Left colon (tissue), 2 donors: ENCODE measurements at regions of chr16 and their contacts with region 1.

Region 1: DNA sequence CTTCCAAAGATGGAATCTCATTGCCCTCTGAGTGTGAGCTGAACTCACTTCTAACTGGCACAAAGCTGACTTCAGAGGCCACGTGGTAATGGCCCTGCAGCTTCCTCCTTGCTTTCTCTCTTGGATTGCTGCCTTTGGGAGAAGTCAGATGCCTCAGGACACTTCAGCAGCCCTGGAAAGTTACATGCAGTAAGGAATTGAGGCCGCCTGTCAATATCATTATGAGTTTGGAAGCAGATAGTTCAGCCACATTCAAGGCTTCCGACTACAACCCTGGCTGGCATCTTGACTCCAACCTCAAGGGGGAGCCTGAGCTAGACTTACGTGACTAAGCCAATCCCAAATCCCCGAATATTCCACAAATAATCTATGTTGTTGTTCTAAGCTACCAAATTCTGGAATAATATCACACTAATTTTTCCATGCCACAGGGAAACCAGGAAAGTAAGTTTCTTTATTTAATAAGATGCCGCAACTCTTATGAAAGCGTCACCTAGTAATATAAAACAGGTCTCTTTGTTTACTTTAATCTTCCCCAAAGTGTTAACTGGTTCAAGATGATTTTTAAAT is 13.6 kb downstream of the CEP20 start:
- DNase-seq: peak; percentile 39 to 65
- ATAC-seq: peak; percentile 94

Region 2: DNA sequence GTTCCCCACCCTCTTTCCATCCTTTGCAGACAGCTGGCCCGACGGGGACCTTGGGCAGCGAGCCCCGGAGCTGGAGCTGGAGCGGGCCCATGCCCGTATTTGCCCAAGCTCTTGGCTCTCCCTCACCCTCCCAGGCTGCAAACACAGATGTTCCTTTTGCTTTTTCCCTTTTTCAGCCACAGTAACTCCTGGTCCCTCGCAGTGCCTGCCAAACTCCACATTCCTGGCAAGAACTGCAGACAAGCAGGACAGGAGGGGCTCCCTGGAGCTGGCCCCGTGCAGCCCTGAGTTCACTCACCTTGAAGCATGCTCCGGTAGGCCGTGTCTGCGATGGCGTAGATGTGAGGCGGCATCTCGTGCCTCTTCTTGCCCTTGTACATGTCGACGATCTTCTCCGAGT is 51.9 kb before region 1 on chr16:
- intact Hi-C with region 1: no loop called
- DNase-seq: peak in 1 of 2 donors; percentile 67
- ATAC-seq: peak; percentile 17

Region 3: DNA sequence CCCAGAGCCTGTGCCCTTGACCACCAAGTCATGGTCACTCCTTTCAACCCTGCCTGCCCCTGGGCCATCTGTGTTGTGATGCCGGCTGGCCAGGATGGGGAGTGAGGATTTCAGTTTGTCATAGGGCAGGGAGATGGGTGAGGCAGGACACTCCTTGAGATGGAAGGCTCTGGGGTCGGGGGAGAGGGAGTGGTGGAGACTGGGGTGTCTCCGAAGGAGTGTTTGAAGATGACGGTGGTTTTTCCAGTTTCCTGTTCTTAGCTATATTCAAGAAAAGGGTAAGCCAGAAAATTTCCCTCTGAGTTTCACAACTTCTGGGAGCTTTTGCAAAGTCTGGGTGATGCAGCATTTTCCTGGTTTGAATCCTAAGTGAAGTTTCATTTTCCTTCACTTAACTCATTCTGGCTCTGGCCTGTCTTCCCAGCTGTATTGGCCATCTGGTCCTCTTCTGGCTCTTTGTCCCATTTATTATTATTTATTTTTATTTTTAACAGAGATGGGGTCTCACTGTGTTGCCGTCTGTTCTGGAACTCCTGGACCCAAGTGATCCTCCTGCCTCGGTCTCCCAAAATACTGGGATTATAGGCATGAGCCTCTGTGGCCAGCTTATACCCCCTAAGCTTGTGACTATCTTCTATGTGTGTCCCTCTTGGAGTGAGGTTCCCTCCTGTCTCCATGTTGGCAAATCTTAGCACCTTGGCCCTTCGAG is 102.3 kb after region 1 on chr16:
- intact Hi-C with region 1: no loop called
- DNase-seq: no peak
- ATAC-seq: no peak

Region 4: GRCh38 chr16:16127469-16128116 is 252.8 kb after region 1 on chr16:
- intact Hi-C with region 1: loop called in 1 of 2 experiments (anchors 5 kb)
- DNase-seq: peak; percentile 45 to 64
- ATAC-seq: peak; percentile 88